Activated CD8-positive, alpha-beta T cell treated with anti-CD3 and anti-CD28 coated beads for 36 hours (primary cell): ENCODE measurements at regions of chr9 and their contacts with region 1.

Region 1: DNA sequence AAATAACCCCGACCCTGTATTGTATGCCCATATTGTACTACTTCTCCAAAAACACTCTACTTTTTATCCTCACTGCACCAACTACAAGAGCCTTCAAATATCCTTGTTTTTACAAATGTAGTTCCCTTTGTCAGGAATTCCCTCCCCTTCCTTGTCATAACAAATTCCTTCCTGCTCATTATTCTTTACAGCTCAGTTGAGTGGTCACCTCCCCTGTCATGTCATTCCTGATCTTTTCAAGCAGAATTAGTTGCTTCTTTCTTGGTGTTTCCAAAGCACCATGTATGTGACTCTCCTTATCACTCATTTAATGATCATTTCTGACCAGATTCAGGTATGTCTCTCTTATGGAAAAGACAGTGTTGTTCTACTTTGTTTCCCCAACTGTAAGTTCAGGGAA is 194.2 kb upstream of the SMC2 start:
- DNase-seq: no peak
- ATAC-seq: no peak
- H3K4me3 Mint-ChIP-seq: no peak overlapping the region
- H3K27ac Mint-ChIP-seq: no peak overlapping the region
- H3K4me1 Mint-ChIP-seq: no peaks in the 10 kb centered on the region
- H3K27me3 Mint-ChIP-seq: peaks cover 1% of the 10 kb centered on the region
- CTCF ChIP-seq: no peak

Region 2: DNA sequence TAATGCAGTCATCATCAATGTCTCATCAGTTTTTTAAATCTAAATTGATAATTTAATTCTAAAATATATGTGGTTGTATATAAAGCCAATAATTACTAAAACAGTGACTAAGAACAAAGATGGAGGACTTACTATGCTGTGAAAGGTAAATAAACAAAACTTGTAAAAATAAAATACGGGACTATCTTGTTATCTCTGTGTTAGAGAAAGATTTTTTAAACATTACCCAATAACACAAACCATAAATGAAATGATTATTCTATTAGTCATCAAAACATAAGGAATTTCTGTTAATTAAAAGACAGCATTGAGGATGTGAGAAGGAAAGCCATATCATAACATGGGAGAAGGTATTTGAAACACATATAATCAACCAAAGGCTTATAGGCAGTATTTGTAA is 32.0 kb before region 1 on chr9:
- CTCF ChIA-PET with region 1: no interaction called
- POLR2A ChIA-PET with region 1: no interaction called
- intact Hi-C with region 1: no loop called
- DNase-seq: no peak
- ATAC-seq: no peak
- H3K4me3 Mint-ChIP-seq: no peak overlapping the region
- H3K27ac Mint-ChIP-seq: no peak overlapping the region
- H3K4me1 Mint-ChIP-seq: no peaks in the 10 kb centered on the region
- H3K27me3 Mint-ChIP-seq: no peaks in the 10 kb centered on the region
- CTCF ChIP-seq: no peak

Region 3: GRCh38 chr9:103942651-103943050 is 42.8 kb after region 1 on chr9:
- CTCF ChIA-PET with region 1: no interaction called
- POLR2A ChIA-PET with region 1: no interaction called
- intact Hi-C with region 1: loop called (anchors 10 kb)
- DNase-seq: no peak
- ATAC-seq: no peak
- H3K4me3 Mint-ChIP-seq: no peak overlapping the region
- H3K27ac Mint-ChIP-seq: no peak overlapping the region
- H3K4me1 Mint-ChIP-seq: no peaks in the 10 kb centered on the region
- H3K27me3 Mint-ChIP-seq: no peaks in the 10 kb centered on the region
- CTCF ChIP-seq: no peak